ENCODE measurements at regions of chr13 and their contacts with region 1.

Region 1: GRCh38 chr13:27775943-27776342 is 16.3 kb upstream of the GSX1 start:
- DNase-seq: no peak
- H3K4me3 ChIP-seq: no peak overlapping the region
- H3K27ac ChIP-seq: no peak overlapping the region
- H3K4me1 ChIP-seq: no peaks in the 10 kb centered on the region
- H3K27me3 ChIP-seq: peaks cover 51% of the 10 kb centered on the region
- CTCF ChIP-seq: no peak
- EP300 ChIP-seq: no peak
- POLR2A ChIP-seq: no peak

Region 2: DNA sequence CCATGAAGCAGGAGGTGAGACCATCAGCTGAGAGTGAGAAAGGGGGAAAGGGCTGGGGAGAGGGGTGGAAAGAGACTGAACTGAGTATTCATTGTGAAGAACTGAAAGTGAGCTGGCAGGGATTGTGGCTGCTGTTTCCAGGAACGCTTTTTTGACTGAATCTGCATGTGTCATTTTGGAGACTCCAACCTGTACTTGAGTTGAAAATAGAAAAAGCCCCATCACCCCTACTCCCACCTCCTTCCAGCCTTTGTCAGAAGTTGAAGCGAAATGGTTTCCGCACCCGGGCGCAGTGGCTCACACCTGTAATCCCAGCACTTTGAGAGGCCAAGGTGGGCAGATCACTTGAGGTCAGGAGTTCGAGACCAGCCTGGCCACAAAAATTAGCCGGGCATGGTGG is 887.3 kb before region 1 on chr13:
- in situ Hi-C with region 1: no loop called
- intact Hi-C with region 1: loop called (anchors 2 kb)
- DNase-seq: no peak
- H3K4me3 ChIP-seq: no peak overlapping the region
- H3K27ac ChIP-seq: no peak overlapping the region
- H3K4me1 ChIP-seq: no peaks in the 10 kb centered on the region
- H3K27me3 ChIP-seq: no peaks in the 10 kb centered on the region
- CTCF ChIP-seq: no peak
- EP300 ChIP-seq: no peak
- POLR2A ChIP-seq: no peak

Region 3: GRCh38 chr13:27496536-27497273 is 279.2 kb before region 1 on chr13:
- in situ Hi-C with region 1: no loop called
- intact Hi-C with region 1: no loop called
- DNase-seq: no peak
- H3K4me3 ChIP-seq: no peak overlapping the region
- H3K27ac ChIP-seq: no peak overlapping the region
- H3K4me1 ChIP-seq: no peaks in the 10 kb centered on the region
- H3K27me3 ChIP-seq: no peaks in the 10 kb centered on the region
- CTCF ChIP-seq: no peak
- EP300 ChIP-seq: no peak
- POLR2A ChIP-seq: no peak

Region 4: GRCh38 chr13:27712421-27712820 is 63.5 kb before region 1 on chr13:
- in situ Hi-C with region 1: no loop called
- intact Hi-C with region 1: no loop called
- DNase-seq: peak; percentile 16
- H3K4me3 ChIP-seq: no peak overlapping the region
- H3K27ac ChIP-seq: no peak overlapping the region
- H3K4me1 ChIP-seq: no peaks in the 10 kb centered on the region
- H3K27me3 ChIP-seq: no peaks in the 10 kb centered on the region
- CTCF ChIP-seq: peak in 2 of 5 experiments; percentile 27
- EP300 ChIP-seq: no peak
- POLR2A ChIP-seq: no peak

Measured in transverse colon (tissue), 4 donors.